ENCODE measurements at regions of chr10 and their contacts with region 1.

Region 1: GRCh38 chr10:28663576-28664313 is 13.6 kb upstream of the BAMBI start:
- DNase-seq: peak; percentile 94
- H3K4me3 ChIP-seq: no peak overlapping the region
- H3K27ac ChIP-seq: no peak overlapping the region
- H3K4me1 ChIP-seq: no peaks in the 10 kb centered on the region
- H3K27me3 ChIP-seq: no peaks in the 10 kb centered on the region
- CTCF ChIP-seq: peak; percentile 98

Region 2: GRCh38 chr10:28628184-28628893 is 35.4 kb before region 1 on chr10:
- CTCF ChIA-PET with region 1: interaction called, 5 read pairs
- POLR2A ChIA-PET with region 1: no interaction called
- intact Hi-C with region 1: loop called (anchors 1 kb)
- DNase-seq: peak; percentile 85
- H3K4me3 ChIP-seq: no peak overlapping the region
- H3K27ac ChIP-seq: no peak overlapping the region
- H3K4me1 ChIP-seq: peaks cover 14% of the 10 kb centered on the region
- H3K27me3 ChIP-seq: no peaks in the 10 kb centered on the region
- CTCF ChIP-seq: peak; percentile 97

Region 3: DNA sequence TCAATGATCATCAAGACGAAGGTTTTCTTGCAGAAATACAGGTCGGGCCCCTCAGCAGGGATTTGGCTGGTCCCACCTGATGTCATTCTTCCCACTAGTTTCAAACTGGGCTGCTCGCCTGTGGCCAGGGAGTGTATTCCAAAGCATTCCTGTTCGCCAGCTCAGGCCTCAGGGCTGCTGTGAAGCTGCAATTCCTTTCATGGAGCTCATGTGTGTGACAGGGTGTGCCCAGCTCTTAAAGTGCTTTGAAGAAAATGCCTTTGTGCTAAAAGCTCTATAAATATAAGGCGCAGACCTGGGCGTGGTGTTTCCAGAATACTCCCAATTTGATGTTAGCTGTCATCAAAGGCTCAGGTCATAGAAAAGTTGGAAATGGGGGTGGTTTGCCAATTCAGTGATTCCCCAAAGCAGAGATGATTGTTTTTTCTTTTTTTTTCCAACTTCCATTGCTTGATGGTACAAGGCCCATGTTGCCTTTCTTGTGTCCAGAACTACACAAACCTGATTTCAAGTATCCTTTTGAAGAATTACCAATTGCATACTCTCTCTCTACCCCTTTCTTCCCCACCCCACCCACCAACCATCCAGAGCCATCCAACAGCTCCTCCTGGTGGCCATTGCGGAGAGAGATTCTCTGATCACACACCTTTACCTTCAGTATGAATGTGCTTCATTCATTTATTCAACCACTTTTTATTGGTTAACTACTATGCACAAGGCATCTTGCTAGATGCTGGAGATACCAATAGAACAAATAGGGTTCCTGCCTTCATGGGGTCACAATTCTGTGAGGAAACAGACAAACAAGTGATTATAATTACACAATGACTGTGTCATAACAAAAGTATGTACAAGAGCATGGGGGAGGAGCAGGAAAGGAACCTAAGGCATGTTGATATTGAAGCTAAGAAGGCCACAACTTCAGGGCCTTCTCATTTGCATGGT is 327.9 kb after region 1 on chr10:
- CTCF ChIA-PET with region 1: interaction called, 13 read pairs
- POLR2A ChIA-PET with region 1: no interaction called
- intact Hi-C with region 1: loop called (anchors 1 kb)
- DNase-seq: peak; percentile 75
- H3K4me3 ChIP-seq: no peak overlapping the region
- H3K27ac ChIP-seq: no peak overlapping the region
- H3K4me1 ChIP-seq: no peaks in the 10 kb centered on the region
- H3K27me3 ChIP-seq: no peaks in the 10 kb centered on the region
- CTCF ChIP-seq: peak; percentile 91

Region 4: DNA sequence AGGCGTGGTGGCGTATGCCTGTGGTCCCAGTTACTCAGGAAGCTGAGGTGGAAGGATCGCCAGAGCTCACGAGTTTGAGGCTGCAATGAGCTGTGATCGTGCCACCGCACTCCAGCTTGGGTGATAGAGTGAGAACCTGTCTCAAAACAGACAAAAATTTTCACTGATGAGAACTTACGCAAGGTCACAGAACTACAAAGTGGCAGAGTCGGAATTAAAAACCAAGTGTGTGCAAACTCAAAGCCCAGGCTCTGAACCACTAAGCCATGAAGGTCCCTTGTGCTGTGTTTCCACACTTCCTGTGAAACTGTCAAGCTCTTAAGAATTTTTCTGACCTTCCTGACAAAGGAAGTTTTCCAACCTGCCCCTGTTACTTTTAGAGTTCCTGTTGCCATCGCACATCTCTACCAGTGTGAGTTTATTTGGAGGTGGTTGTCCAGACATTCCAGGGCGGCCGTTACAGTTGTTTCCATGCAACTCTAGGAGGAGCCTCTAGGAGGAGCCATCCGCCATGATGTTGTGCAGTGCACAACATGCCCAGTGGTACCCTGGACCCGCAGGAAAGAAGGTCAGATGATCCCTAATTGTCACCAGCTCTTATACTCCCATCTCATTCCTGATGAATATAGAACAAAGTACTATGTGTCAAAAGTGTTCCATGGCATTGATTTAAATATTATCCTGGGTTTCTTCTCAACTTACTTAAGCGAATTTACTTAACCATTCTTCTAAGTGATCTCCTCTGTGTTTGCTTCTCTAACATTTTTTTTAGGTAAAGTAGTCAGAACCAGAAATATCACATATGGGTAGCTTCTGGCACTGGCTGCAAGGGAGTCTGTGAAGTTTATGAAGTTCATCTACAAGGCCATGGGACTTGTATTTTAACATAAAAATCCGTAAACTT is 576.1 kb after region 1 on chr10:
- CTCF ChIA-PET with region 1: no interaction called
- POLR2A ChIA-PET with region 1: no interaction called
- intact Hi-C with region 1: loop called (anchors 5 kb)
- DNase-seq: peak; percentile 64
- H3K4me3 ChIP-seq: no peak overlapping the region
- H3K27ac ChIP-seq: no peak overlapping the region
- H3K4me1 ChIP-seq: peaks cover 8% of the 10 kb centered on the region
- H3K27me3 ChIP-seq: no peaks in the 10 kb centered on the region
- CTCF ChIP-seq: peak; percentile 80

Measured in A673 (cell line).